Heart left ventricle (tissue), 16 donors: ENCODE measurements at regions of chr14 and their contacts with region 1.

Region 1: DNA sequence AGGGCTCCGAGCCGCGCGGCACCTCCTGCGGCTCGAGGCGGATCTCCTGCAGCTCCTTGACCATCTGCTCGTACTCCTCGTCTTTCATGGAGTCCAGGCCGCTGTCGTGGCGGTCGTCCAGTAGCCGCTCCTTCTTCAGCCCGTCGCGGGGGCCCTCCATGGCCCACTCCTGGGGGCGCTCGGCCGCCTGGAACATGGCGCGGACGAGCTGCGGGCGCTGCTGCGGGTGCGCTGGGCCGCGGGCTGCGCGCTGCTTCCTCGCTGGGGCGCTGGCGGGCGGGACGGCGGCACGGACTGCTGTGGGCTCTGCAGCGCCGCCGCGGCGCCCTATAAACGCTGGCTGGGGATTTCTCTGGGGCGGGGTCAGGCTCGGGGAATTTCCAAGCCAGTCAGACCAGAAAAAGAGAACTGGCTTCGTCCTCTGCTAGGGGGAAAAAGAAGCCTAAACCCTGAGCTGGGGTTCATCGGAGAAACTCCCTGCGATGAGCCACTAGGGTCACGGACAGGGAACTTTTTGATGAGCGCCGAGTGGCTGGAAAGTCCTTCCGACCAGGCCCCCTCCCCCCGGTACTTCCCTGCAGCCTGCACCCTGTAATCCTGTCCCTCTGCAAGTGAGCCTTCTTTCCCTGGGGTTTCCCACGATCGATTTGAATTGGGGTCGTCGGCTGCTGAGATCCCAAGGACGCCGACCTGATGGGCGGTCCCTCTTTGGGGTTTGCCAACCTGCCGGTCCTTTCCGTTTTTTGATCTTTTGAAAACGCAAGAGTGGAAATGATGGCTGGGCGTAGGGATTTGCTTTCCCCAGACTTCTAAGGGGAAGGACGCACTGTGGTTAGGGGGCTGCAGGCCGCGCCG is at the start of gene NFKBIA:
- DNase-seq: peak; percentile 92 to 96 (median 94)
- ATAC-seq: peak; percentile 56 to 78 (median 70)
- H3K4me3 ChIP-seq: peak within 1 kb of the TSS; percentile 77 to 98 (median 90)
- H3K27ac ChIP-seq: peak within 1 kb of the TSS; percentile 99 to 100 (median 100)
- H3K4me1 ChIP-seq: peaks cover 0 to 76% (median 55%) of the 10 kb centered on the region in 12 donors
- H3K27me3 ChIP-seq: no peaks in the 10 kb centered on the region
- CTCF ChIP-seq: peak in 10 of 12 donors; percentile 7 to 55 (median 34)
- POLR2A ChIP-seq: peak; percentile 81 to 99
- total RNA-seq, gene NFKBIA: 42.7 to 193 (median 68.5) TPM

Region 2: GRCh38 chr14:35046048-35046741 is 358.5 kb before region 1 on chr14 and contains the start of gene FAM177A1:
- intact Hi-C with region 1: loop called in 3 of 10 experiments (anchors 5 to 10 kb)
- DNase-seq: peak; percentile 97 to 99 (median 99)
- ATAC-seq: peak; percentile 96 to 98 (median 98)
- H3K4me3 ChIP-seq: peak within 1 kb of the TSS; percentile 62 to 95 (median 84)
- H3K27ac ChIP-seq: peak within 1 kb of the TSS; percentile 91 to 99 (median 96)
- H3K4me1 ChIP-seq: peaks cover 0 to 43% (median 27%) of the 10 kb centered on the region in 12 donors
- H3K27me3 ChIP-seq: no peaks in the 10 kb centered on the region
- CTCF ChIP-seq: no peak
- POLR2A ChIP-seq: peak; percentile 74 to 96
- total RNA-seq, gene FAM177A1: 56.3 to 129 (median 98.8) TPM

Region 3: DNA sequence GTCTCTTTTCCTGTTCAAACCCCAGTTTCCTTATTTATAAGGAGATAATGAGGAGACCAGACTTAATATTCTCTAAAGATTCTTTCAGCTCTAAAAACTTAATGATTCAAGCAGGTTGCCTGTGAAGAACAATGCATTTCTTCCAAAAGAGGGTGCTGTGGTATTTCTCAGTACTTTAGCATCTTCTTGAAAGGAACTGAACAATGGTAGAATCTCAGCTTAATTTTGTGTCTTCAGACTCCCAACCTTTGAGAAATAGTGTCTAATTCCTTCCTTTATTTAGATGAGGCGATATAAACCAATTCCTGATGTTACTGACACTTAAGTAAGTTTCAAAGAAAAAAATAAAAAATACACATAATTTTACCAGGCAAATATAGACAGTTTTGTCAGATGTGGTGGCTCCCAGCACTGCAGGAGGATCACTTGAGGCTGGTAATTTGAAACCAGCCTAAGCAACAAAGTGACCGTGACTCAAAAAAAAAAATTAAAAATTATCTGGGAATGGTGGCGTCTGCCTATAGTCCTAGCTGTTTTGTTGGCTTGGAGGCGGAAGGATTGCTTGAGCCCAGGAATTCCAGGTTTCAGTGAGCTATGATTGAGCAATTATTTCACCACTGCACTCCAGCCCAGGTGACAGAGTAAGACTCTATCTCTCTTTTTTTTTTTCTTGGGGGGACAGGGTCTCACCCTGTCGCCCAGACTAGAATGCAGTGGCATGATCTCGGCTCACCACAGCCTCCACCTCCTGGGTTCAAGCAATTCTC is 189.4 kb before region 1 on chr14:
- intact Hi-C with region 1: loop called in 3 of 10 experiments (anchors 5 kb)
- DNase-seq: no peak
- ATAC-seq: peak in 3 of 4 donors; percentile 52 to 64 (median 59)
- H3K4me3 ChIP-seq: no peak overlapping the region
- H3K27ac ChIP-seq: peak overlapping the region in 1 of 12 donors; percentile 14
- H3K4me1 ChIP-seq: peaks cover 0 to 8% (median 0%) of the 10 kb centered on the region in 12 donors
- H3K27me3 ChIP-seq: no peaks in the 10 kb centered on the region
- CTCF ChIP-seq: peak; percentile 28 to 70 (median 60)
- POLR2A ChIP-seq: no peak

Region 4: DNA sequence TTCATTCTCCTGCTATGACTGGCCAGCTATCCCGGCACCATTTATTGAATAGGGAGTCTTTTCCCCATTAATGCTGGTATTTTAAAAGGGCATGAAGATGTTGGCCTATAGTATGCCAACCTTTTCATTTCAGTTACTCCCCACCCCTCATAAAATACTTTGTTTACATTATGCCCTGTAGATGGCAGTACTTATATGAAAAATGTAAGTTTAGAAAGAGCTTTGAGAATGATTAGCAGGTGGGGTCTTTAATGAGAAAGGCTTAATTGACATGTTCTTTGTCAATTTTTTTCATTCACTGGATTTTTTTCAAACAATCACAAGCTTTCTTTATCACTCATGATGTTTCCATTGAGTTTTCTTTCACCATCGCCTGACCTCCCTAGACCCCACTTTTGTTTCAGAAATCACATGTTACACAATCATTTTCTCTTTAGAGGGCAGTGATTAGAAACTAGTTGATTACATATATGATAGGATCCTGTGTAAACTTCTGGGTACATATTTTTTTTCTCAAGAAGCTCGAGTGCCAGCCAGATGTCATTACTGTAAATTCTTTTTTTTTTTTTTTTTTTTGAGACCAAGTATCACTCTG is 175.1 kb before region 1 on chr14:
- intact Hi-C with region 1: loop called in 4 of 10 experiments (anchors 2 to 5 kb)
- DNase-seq: no peak
- ATAC-seq: no peak
- H3K4me3 ChIP-seq: no peak overlapping the region
- H3K27ac ChIP-seq: no peak overlapping the region
- H3K4me1 ChIP-seq: peaks cover 0 to 33% (median 0%) of the 10 kb centered on the region in 12 donors
- H3K27me3 ChIP-seq: no peaks in the 10 kb centered on the region
- CTCF ChIP-seq: peak in 11 of 12 donors; percentile 9 to 49 (median 30)
- POLR2A ChIP-seq: no peak

Region 5: DNA sequence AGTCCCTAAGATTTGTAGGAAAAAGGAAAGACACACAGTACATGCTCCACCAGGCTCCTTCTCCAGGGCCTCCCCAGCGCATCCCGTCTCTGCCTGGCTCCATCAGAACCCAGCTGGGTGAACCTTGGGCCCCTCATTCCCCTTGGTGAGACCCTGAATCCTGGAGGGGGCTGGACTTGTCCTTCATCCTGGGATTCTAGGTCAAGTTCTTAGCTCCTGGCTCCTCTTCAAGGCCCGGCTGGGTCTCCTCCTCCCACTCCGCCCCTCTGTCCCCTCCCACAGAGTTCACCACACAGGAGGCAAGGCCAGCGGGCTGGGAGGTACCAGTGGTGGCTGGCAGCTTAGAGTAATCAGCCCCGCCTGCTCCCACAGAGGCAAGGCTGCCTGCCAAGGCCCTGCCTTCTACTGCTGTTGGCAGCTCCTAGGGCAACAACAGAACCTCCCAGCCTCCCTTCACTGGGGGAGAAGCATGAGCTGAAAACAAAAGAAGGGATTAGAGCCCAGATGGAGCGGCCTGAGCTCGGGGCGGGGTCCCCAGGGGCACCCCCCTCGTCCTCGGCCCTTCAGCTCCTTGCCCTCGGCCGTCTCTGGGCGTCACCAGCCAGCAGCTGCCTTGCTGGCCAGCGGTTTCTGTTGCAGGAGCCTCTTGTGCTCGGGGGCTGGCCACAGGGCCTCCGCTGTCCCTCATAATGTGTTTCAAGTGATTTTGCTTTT is 63.1 kb before region 1 on chr14:
- intact Hi-C with region 1: loop called (anchors 1 to 5 kb)
- DNase-seq: peak; percentile 94 to 98 (median 96)
- ATAC-seq: peak; percentile 91 to 95 (median 92)
- H3K4me3 ChIP-seq: peak overlapping the region in 10 of 12 donors; percentile 14 to 51 (median 38)
- H3K27ac ChIP-seq: peak overlapping the region; percentile 85 to 99 (median 94)
- H3K4me1 ChIP-seq: peaks cover 16 to 74% (median 47%) of the 10 kb centered on the region in 12 donors
- H3K27me3 ChIP-seq: no peaks in the 10 kb centered on the region
- CTCF ChIP-seq: no peak
- POLR2A ChIP-seq: peak in 1 of 2 donors; percentile 74

Region 6: GRCh38 chr14:35847636-35848035 is 443.0 kb after region 1 on chr14:
- intact Hi-C with region 1: no loop called
- DNase-seq: no peak
- ATAC-seq: no peak
- H3K4me3 ChIP-seq: no peak overlapping the region
- H3K27ac ChIP-seq: no peak overlapping the region
- H3K4me1 ChIP-seq: no peaks in the 10 kb centered on the region
- H3K27me3 ChIP-seq: no peaks in the 10 kb centered on the region
- CTCF ChIP-seq: no peak
- POLR2A ChIP-seq: no peak